GM10248 (cell line): ENCODE measurements at regions of chr13 and their contacts with region 1.

Region 1: GRCh38 chr13:33879118-33879517 is 61.2 kb downstream of the RFC3 start:
- DNase-seq: no peak
- CTCF ChIP-seq: no peak

Region 2: GRCh38 chr13:33867472-33867871 is 11.6 kb before region 1 on chr13:
- CTCF ChIA-PET with region 1: interaction called, 11 read pairs
- POLR2A ChIA-PET with region 1: no interaction called
- DNase-seq: no peak
- CTCF ChIP-seq: no peak

Region 3: DNA sequence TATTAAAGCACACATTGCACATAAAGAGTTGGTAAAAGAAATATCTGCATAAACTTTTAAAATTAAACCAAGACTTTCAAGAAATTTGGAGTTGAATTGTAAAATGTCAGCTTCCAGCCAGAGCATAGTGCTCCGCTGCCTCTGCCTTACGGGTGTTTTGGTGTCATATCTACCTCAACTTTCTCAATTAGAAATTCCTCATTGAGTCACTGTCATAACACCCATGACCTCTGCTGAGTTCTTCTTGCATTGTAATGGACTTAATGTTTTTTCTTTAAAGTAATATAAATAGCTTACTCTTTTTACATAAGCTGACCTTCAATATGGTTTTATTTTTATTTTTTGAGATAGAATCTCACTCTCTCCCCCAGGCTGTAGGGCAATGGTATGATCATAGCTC is 512.0 kb after region 1 on chr13:
- CTCF ChIA-PET with region 1: no interaction called
- POLR2A ChIA-PET with region 1: no interaction called
- DNase-seq: no peak
- CTCF ChIP-seq: no peak